ENCODE measurements at regions of chr2 and their contacts with region 1.

Region 1: DNA sequence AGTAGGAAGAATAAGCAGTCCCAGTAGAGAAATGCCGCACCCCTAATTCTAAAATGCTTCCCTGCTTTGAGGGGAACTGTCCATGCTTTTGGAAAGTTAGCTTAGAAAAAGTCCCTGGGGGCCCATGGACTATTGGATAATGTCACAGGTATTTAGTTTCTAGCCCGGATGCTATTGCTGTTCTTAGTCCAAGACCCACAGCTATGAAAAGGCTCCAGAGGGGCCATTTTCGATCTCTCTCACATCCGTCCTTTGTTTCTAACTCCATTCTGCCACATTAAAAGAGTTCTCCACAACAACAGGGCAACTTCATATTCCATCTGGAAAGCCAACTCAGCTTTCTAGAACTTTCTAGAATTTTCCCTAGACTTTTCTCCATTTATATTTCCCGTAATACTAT is 47.2 kb downstream of the MGAT4A start:
- DNase-seq: no peak
- H3K4me3 ChIP-seq: no peak overlapping the region
- H3K27ac ChIP-seq: no peak overlapping the region
- H3K4me1 ChIP-seq: no peaks in the 10 kb centered on the region
- H3K27me3 ChIP-seq: no peaks in the 10 kb centered on the region
- CTCF ChIP-seq: no peak
- EP300 ChIP-seq: no peak
- POLR2A ChIP-seq: no peak

Region 2: GRCh38 chr2:98654699-98655495 is 28.8 kb before region 1 on chr2:
- in situ Hi-C with region 1: no loop called
- intact Hi-C with region 1: loop called (anchors 1 kb)
- DNase-seq: no peak
- H3K4me3 ChIP-seq: no peak overlapping the region
- H3K27ac ChIP-seq: peak overlapping the region in 3 of 4 donors; percentile 4 to 36 (median 26)
- H3K4me1 ChIP-seq: peaks cover 0 to 34% (median 10%) of the 10 kb centered on the region in 4 donors
- H3K27me3 ChIP-seq: no peaks in the 10 kb centered on the region
- CTCF ChIP-seq: no peak
- EP300 ChIP-seq: no peak
- POLR2A ChIP-seq: no peak